ENCODE measurements at regions of chr1 and their contacts with region 1.

Region 1: GRCh38 chr1:160085686-160086455 is 4.5 kb downstream of the KCNJ9 start:
- DNase-seq: peak; percentile 30
- H3K4me3 ChIP-seq: no peak overlapping the region
- H3K27ac ChIP-seq: no peak overlapping the region
- H3K4me1 ChIP-seq: peaks cover 8% of the 10 kb centered on the region
- H3K27me3 ChIP-seq: no peaks in the 10 kb centered on the region
- CTCF ChIP-seq: peak; percentile 76 to 86

Region 2: DNA sequence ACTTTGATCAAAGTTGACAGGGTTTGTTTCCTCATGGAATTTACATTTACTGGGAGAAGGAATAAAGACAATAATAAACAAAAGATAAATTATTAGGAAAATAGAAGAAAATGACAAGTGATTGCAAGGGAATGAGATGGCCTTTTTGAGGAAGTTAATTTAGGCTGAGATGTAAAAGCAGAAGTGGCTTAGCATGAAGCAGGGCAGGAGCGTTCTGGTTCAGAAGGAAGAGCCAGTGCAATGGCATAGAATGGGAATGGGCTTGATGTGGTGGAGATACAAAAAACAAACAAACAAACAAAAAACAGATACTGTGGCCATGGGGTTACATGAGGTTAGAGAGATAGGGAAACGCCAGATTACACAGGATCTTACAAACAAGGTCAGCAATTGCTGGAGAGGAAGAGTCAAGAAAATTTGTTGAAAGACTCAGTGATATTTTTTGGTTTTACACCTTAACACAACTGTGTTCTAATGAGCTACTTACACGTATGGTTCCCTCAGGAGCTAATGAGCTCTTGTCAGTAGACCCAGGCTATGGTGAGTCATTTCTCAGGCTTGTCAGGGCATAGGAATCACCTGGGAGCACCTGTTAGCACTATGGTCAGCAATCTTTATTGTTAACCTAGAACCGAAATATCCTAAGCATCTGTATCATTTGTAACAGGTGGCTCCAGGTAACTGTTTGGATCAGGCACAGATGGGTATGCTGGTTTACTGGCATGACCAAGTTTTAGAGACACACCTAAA is 923.2 kb before region 1 on chr1:
- CTCF ChIA-PET with region 1: no interaction called
- dilution Hi-C with region 1: no loop called
- in situ Hi-C with region 1: no loop called
- intact Hi-C with region 1: no loop called
- DNase-seq: peak; percentile 64
- H3K4me3 ChIP-seq: no peak overlapping the region
- H3K27ac ChIP-seq: no peak overlapping the region
- H3K4me1 ChIP-seq: peaks cover 13% of the 10 kb centered on the region
- H3K27me3 ChIP-seq: peaks cover 3% of the 10 kb centered on the region
- CTCF ChIP-seq: no peak

Region 3: GRCh38 chr1:159911326-159912070 is 174.4 kb before region 1 on chr1:
- CTCF ChIA-PET with region 1: no interaction called
- dilution Hi-C with region 1: no loop called
- in situ Hi-C with region 1: no loop called
- intact Hi-C with region 1: no loop called
- DNase-seq: no peak
- H3K4me3 ChIP-seq: no peak overlapping the region
- H3K27ac ChIP-seq: peak overlapping the region; percentile 89
- H3K4me1 ChIP-seq: peaks cover 50% of the 10 kb centered on the region
- H3K27me3 ChIP-seq: no peaks in the 10 kb centered on the region
- CTCF ChIP-seq: no peak

Region 4: GRCh38 chr1:159936273-159936904 is 149.5 kb before region 1 on chr1:
- CTCF ChIA-PET with region 1: no interaction called
- dilution Hi-C with region 1: no loop called
- in situ Hi-C with region 1: loop called in 1 of 2 experiments (anchors 10 kb)
- intact Hi-C with region 1: no loop called
- DNase-seq: peak; percentile 51
- H3K4me3 ChIP-seq: no peak overlapping the region
- H3K27ac ChIP-seq: no peak overlapping the region
- H3K4me1 ChIP-seq: peaks cover 33% of the 10 kb centered on the region
- H3K27me3 ChIP-seq: no peaks in the 10 kb centered on the region
- CTCF ChIP-seq: peak; percentile 97 to 98

Region 5: GRCh38 chr1:160046494-160047110 is 39.3 kb before region 1 on chr1:
- CTCF ChIA-PET with region 1: no interaction called
- dilution Hi-C with region 1: no loop called
- in situ Hi-C with region 1: loop called in 1 of 2 experiments (anchors 5 kb)
- intact Hi-C with region 1: no loop called
- DNase-seq: peak; percentile 29
- H3K4me3 ChIP-seq: no peak overlapping the region
- H3K27ac ChIP-seq: no peak overlapping the region
- H3K4me1 ChIP-seq: no peaks in the 10 kb centered on the region
- H3K27me3 ChIP-seq: no peaks in the 10 kb centered on the region
- CTCF ChIP-seq: peak; percentile 41 to 73

Region 6: GRCh38 chr1:160204526-160205241 is 118.8 kb after region 1 on chr1:
- CTCF ChIA-PET with region 1: no interaction called
- dilution Hi-C with region 1: no loop called
- in situ Hi-C with region 1: no loop called
- intact Hi-C with region 1: no loop called
- DNase-seq: no peak
- H3K4me3 ChIP-seq: peak overlapping the region in 2 of 3 experiments; percentile 26 to 34
- H3K27ac ChIP-seq: peak overlapping the region; percentile 66
- H3K4me1 ChIP-seq: peaks cover 23% of the 10 kb centered on the region
- H3K27me3 ChIP-seq: no peaks in the 10 kb centered on the region
- CTCF ChIP-seq: no peak

Region 7: GRCh38 chr1:160291248-160292220 is 205.7 kb after region 1 on chr1:
- CTCF ChIA-PET with region 1: no interaction called
- dilution Hi-C with region 1: no loop called
- in situ Hi-C with region 1: no loop called
- intact Hi-C with region 1: loop called (anchors 1 kb)
- DNase-seq: peak; percentile 51
- H3K4me3 ChIP-seq: no peak overlapping the region
- H3K27ac ChIP-seq: no peak overlapping the region
- H3K4me1 ChIP-seq: no peaks in the 10 kb centered on the region
- H3K27me3 ChIP-seq: no peaks in the 10 kb centered on the region
- CTCF ChIP-seq: peak; percentile 78 to 84

Region 8: GRCh38 chr1:160376525-160377131 is 290.8 kb after region 1 on chr1:
- CTCF ChIA-PET with region 1: no interaction called
- dilution Hi-C with region 1: no loop called
- in situ Hi-C with region 1: no loop called
- intact Hi-C with region 1: loop called (anchors 1 kb)
- DNase-seq: peak; percentile 46
- H3K4me3 ChIP-seq: no peak overlapping the region
- H3K27ac ChIP-seq: no peak overlapping the region
- H3K4me1 ChIP-seq: peaks cover 3% of the 10 kb centered on the region
- H3K27me3 ChIP-seq: no peaks in the 10 kb centered on the region
- CTCF ChIP-seq: peak; percentile 96 to 97

Region 9: DNA sequence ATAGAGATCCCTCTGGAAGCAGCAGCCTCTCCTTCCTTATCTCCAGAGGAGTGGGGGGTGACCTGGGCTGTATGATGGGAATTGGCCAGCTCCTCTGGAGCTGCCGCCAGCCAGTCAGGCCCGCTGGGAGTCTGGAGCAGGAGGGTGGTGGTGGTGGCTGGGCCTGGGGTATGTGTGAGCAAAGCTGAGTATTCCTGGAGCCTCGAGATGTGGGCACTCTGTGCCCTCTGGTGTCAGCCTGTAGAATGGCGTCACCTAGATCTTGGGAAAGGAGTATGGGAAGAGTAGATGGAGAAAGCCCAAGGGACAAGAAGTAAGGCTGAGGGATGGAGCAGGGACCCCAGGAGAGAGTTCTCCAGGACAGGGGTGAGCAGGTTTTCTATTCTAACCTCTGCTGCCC is 330.5 kb after region 1 on chr1:
- CTCF ChIA-PET with region 1: no interaction called
- dilution Hi-C with region 1: no loop called
- in situ Hi-C with region 1: loop called in 1 of 2 experiments (anchors 25 kb)
- intact Hi-C with region 1: loop called (anchors 5 kb)
- DNase-seq: peak; percentile 56
- H3K4me3 ChIP-seq: no peak overlapping the region
- H3K27ac ChIP-seq: no peak overlapping the region
- H3K4me1 ChIP-seq: peaks cover 15% of the 10 kb centered on the region
- H3K27me3 ChIP-seq: no peaks in the 10 kb centered on the region
- CTCF ChIP-seq: peak; percentile 62 to 84

Region 10: DNA sequence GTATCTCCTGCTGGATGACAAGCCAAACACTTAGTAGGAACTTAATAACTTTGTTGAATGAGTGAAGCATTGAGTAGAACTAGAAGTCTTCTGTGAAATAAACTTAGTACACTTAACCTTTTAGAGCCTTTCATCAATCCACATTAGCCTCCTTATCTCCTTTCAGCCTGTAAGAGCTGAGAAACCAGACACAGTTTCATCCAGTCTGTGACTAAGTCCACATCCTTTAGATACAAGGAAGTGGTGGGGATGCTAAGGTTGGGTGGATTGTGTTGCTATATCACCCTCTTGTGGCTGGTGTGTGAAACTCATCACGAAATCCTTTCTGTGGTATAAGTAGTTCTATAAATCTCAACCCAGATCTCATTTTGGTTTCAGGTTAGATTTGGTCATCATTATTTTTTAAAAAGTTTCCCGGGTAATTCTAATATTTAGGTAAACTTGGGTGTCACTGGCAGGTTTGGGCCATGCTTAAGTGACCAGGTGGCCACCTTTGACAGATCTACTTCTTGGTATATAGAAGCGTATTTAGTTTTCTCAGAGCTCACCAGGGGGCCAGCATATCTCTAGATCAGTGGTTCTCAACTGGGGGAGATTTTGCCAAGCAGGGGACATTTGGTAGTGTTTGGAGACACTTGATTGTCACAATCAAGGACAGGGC is 521.3 kb after region 1 on chr1:
- CTCF ChIA-PET with region 1: no interaction called
- dilution Hi-C with region 1: no loop called
- in situ Hi-C with region 1: no loop called
- intact Hi-C with region 1: loop called (anchors 5 kb)
- DNase-seq: peak; percentile 70
- H3K4me3 ChIP-seq: no peak overlapping the region
- H3K27ac ChIP-seq: no peak overlapping the region
- H3K4me1 ChIP-seq: no peaks in the 10 kb centered on the region
- H3K27me3 ChIP-seq: peaks cover 2% of the 10 kb centered on the region
- CTCF ChIP-seq: peak; percentile 78 to 79